Psoas muscle (tissue), 8 donors: ENCODE measurements at regions of chr18 and their contacts with region 1.

Region 1: GRCh38 chr18:55405893-55406406 is 182.0 kb downstream of the TCF4 start:
- DNase-seq: peak; percentile 90 to 94
- ATAC-seq: peak; percentile 84 to 93 (median 92)
- H3K4me3 ChIP-seq: peak overlapping the region; percentile 64
- H3K27ac ChIP-seq: peak overlapping the region; percentile 79
- H3K4me1 ChIP-seq: peaks cover 25% of the 10 kb centered on the region
- H3K27me3 ChIP-seq: no peaks in the 10 kb centered on the region
- CTCF ChIP-seq: peak; percentile 36

Region 2: GRCh38 chr18:55343396-55344073 is 62.4 kb before region 1 on chr18:
- intact Hi-C with region 1: loop called (anchors 2 to 5 kb)
- DNase-seq: no peak
- ATAC-seq: peak in 3 of 4 donors; percentile 63 to 75 (median 72)
- H3K4me3 ChIP-seq: no peak overlapping the region
- H3K27ac ChIP-seq: no peak overlapping the region
- H3K4me1 ChIP-seq: peaks cover 43% of the 10 kb centered on the region
- H3K27me3 ChIP-seq: no peaks in the 10 kb centered on the region
- CTCF ChIP-seq: peak; percentile 65